ENCODE measurements at regions of chr12 and their contacts with region 1.

Region 1: DNA sequence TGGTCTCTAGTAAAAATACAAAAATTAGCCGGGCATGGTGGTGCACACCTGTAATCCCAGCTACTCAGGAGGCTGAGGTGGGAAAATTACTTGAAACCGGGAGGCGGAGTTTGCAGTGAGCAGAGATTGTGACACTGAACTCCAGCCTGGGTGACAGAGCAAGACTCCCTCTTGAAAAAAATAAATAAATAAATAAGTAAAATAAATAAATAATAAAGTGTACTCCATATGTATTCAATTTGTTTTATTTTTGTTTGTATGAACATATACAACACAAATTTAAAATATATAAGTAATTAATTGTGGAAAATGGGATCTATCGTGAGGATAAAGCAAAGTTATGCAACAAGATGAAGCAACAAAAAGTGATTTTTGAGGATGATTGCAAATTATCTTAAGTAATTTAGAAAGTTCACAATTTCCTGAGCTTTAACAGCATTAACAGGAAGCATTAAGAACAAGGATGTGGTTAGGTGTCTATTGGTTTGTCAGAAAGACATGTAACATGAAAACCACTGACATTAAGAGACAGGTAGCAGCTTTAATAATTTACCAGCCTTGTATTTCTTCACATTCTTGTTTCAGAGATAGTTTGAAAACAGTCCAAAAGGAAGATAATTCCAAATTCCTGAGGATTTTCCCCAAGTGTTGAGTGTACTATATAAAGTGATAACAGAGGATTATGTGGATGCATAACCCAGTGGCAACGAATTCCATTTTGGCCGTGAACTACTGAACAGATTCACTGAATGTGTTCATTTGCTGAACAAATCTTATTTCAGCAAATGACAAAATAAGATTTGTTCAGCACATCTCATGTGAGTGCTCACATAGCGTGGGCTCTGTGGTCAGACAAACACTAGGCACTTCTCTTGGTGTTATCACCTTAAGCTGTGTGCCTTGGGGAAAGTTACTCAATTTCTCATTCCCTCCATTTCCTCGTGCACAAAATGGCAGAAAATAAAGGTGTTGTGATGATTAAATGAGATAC is 68.6 kb upstream of the RESF1 start:
- DNase-seq: no peak
- H3K4me3 Mint-ChIP-seq: peak overlapping the region; percentile 18
- H3K27ac Mint-ChIP-seq: peak overlapping the region; percentile 90
- H3K4me1 Mint-ChIP-seq: peaks cover 54% of the 10 kb centered on the region
- H3K27me3 Mint-ChIP-seq: no peaks in the 10 kb centered on the region

Region 2: DNA sequence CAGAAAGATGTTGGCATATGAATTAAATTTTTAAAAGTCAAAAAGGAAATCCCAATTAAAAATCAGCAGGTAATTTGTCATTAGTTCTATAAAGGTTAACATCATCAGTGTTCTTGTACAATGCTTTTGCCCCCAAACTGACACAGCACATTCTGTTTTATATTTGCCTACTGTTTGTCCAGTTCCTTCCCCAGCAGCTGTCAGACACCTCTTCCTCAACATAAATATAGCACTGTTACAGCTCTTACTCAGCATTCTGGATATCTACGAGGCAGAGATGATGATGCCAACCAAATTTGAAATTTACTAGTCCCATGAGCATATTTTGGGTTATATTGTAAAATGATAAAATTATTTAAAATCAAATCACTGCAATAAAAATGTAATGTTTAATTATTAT is 689.2 kb before region 1 on chr12:
- CTCF ChIA-PET with region 1: no interaction called
- intact Hi-C with region 1: no loop called
- DNase-seq: no peak
- H3K4me3 Mint-ChIP-seq: no peak overlapping the region
- H3K27ac Mint-ChIP-seq: no peak overlapping the region
- H3K4me1 Mint-ChIP-seq: peaks cover 23% of the 10 kb centered on the region
- H3K27me3 Mint-ChIP-seq: peaks cover 24% of the 10 kb centered on the region

Region 3: GRCh38 chr12:31859232-31859977 is 31.2 kb before region 1 on chr12:
- CTCF ChIA-PET with region 1: no interaction called
- intact Hi-C with region 1: loop called (anchors 2 kb)
- DNase-seq: peak; percentile 33
- H3K4me3 Mint-ChIP-seq: no peak overlapping the region
- H3K27ac Mint-ChIP-seq: peak overlapping the region; percentile 65
- H3K4me1 Mint-ChIP-seq: peaks cover 23% of the 10 kb centered on the region
- H3K27me3 Mint-ChIP-seq: no peaks in the 10 kb centered on the region